Activated CD4-positive, alpha-beta T cell treated with anti-CD3 and anti-CD28 coated beads, Interleukin-2, amount 10 ng/mL, durations not matched to agents 24 days and 14 days (primary cell): ENCODE measurements at regions of chr11 and their contacts with region 1.

Region 1: DNA sequence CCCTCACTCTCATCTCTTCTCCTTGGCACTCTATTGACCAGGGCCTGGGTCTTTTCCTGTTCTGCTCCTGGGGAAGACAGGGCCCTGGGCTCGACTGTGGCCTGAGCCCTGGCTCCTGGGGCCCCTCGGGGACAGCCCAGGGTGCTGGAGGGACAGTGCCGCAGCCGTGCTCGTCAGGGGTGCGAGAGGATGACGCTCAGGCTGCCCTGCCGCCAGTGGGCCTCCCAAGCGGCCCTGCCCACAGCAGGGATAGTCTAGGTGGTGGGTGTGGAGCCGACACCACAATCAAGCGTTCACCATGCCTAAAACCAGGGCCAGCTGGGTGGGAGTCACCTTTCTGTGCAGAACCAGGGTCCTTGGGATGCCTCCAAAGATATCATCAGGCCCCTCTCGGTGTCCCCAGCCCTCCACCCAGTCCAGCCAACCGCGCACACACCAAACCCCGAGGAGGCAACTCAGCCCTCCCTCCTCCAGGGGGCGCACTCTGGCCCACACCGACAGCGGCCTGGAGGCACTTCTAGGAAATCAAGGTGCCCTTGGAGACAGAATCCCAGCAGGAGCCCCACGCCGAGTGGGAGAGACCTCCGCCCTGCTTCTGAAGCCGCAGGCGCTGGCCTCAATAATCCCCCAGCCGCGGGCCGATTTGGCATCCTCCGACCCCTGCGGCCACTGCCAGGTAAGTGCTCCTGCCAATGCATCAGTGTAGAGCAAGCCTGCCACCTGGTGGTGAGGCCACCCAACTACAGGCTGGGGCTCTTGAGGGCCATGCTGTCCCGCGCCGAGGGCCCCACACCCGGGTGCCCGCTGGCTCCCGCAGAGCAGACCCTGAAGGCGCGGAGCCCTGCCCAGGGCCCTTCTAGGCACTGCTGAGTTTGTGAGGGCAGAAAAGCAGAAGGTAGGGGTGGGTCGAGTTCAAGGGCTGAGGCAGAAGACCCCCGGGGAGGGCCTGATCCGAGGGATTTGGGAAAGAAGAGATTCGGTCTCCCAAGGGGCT is 496.4 kb downstream of the BUD13 start:
- DNase-seq: peak; percentile 92
- H3K4me3 Mint-ChIP-seq: peak overlapping the region; percentile 48
- H3K27ac Mint-ChIP-seq: no peak overlapping the region
- H3K4me1 Mint-ChIP-seq: no peaks in the 10 kb centered on the region
- H3K27me3 Mint-ChIP-seq: no peaks in the 10 kb centered on the region

Region 2: GRCh38 chr11:114738954-114739353 is 1537.4 kb before region 1 on chr11:
- intact Hi-C with region 1: loop called (anchors 5 kb)
- DNase-seq: peak; percentile 80
- H3K4me3 Mint-ChIP-seq: no peak overlapping the region
- H3K27ac Mint-ChIP-seq: no peak overlapping the region
- H3K4me1 Mint-ChIP-seq: no peaks in the 10 kb centered on the region
- H3K27me3 Mint-ChIP-seq: peaks cover 3% of the 10 kb centered on the region

Region 3: DNA sequence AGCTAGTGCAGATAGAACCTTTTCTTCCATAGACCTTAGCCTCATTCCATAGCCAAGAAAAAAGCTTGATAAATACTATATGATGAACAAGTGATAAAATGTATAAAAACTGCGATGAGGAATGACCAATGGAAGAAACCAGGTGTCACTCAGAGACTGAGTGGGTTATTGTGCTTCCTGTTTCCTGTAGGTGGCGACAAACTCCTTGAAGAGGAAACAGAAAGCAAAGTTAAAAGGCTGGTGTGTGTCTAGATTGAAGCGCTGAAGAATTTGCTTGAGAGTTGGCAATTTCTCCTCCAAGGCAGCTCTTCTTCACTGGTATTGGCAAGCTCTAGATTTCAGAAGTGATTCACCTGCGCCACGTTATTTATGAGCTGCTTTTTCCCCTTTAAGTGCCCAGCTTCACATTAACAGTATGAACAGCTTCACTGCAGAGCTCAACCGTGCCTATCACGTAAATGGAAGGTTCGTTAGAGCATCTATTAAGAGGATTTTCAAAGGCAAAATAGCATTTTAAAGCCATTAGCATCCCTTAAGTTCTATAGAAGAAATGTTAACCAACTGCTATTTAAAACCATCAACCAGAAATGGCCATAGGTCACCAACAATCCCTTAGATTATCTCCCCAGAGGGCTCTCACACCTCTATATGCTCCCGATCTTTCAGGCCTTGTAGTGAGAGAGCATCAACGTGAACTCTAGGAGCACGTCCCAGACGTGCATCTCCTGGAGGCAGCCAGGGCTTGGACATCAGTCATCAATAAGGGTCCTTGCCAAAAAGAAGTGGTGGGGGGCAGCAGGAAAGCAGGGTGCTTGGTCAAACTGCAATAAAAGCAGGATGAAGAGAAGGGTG is 951.5 kb before region 1 on chr11:
- intact Hi-C with region 1: loop called (anchors 5 kb)
- DNase-seq: peak; percentile 78
- H3K4me3 Mint-ChIP-seq: no peak overlapping the region
- H3K27ac Mint-ChIP-seq: no peak overlapping the region
- H3K4me1 Mint-ChIP-seq: peaks cover 3% of the 10 kb centered on the region
- H3K27me3 Mint-ChIP-seq: peaks cover 4% of the 10 kb centered on the region

Region 4: GRCh38 chr11:116217006-116217405 is 59.3 kb before region 1 on chr11:
- intact Hi-C with region 1: loop called (anchors 2 kb)
- DNase-seq: peak; percentile 69
- H3K4me3 Mint-ChIP-seq: no peak overlapping the region
- H3K27ac Mint-ChIP-seq: no peak overlapping the region
- H3K4me1 Mint-ChIP-seq: no peaks in the 10 kb centered on the region
- H3K27me3 Mint-ChIP-seq: no peaks in the 10 kb centered on the region

Region 5: DNA sequence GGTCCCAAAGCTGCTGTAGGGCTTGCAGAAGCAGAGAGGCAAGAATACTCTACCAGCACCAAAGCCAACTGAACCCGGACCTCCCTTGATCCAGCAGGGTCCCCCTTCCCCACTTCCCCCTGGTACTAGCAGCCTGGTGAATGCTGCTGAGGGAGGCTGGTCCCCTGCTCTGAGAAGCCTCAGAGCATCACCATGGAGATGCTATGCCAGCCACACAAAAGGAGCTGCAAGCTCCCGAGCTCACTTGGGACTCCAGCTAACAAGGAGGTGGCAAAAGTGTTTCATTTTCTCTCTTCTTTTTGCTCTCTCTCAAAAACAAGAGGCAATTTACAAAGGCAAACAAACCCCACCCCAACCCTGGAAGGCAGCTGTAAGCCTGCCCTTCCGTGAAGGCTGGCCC is 13.3 kb before region 1 on chr11:
- intact Hi-C with region 1: no loop called
- DNase-seq: no peak
- H3K4me3 Mint-ChIP-seq: no peak overlapping the region
- H3K27ac Mint-ChIP-seq: no peak overlapping the region
- H3K4me1 Mint-ChIP-seq: no peaks in the 10 kb centered on the region
- H3K27me3 Mint-ChIP-seq: no peaks in the 10 kb centered on the region

Region 6: DNA sequence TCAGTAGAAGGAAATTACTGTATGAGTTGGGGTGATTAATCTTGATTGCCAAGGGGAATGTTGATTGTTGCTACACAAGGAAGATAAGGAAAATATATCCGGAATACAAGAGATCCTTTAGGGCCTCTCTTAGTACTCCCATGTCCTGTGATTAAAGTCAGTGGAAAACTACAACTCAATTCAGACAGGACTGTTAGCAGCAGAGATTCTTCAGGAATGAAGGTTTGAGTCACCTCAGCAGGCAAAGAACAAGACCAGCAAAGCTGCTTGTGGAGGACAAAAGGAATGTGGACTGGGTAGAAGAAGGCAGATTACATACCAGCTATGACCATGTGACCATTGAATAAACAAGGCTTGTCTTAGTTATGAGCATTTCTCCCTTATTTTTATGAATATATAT is 18.3 kb after region 1 on chr11:
- intact Hi-C with region 1: no loop called
- DNase-seq: no peak
- H3K4me3 Mint-ChIP-seq: no peak overlapping the region
- H3K27ac Mint-ChIP-seq: no peak overlapping the region
- H3K4me1 Mint-ChIP-seq: no peaks in the 10 kb centered on the region
- H3K27me3 Mint-ChIP-seq: no peaks in the 10 kb centered on the region